ENCODE measurements at regions of chr4 and their contacts with region 1.

Region 1: GRCh38 chr4:123396307-123397143 is at the start of gene SPRY1:
- DNase-seq: peak; percentile 77
- H3K4me3 Mint-ChIP-seq: peak within 1 kb of the TSS; percentile 96
- H3K27ac Mint-ChIP-seq: peak within 1 kb of the TSS; percentile 96
- H3K4me1 Mint-ChIP-seq: peaks cover 42% of the 10 kb centered on the region
- H3K27me3 Mint-ChIP-seq: peaks cover 14% of the 10 kb centered on the region
- total RNA-seq, gene SPRY1: 47.6 and 49.0 TPM in 2 replicates

Region 2: GRCh38 chr4:122617597-122618593 is 778.6 kb before region 1 on chr4:
- intact Hi-C with region 1: loop called (anchors 5 kb)
- DNase-seq: no peak
- H3K4me3 Mint-ChIP-seq: peak overlapping the region; percentile 93
- H3K27ac Mint-ChIP-seq: peak overlapping the region; percentile 93
- H3K4me1 Mint-ChIP-seq: peaks cover 67% of the 10 kb centered on the region
- H3K27me3 Mint-ChIP-seq: no peaks in the 10 kb centered on the region

Region 3: GRCh38 chr4:123102897-123103471 is 293.5 kb before region 1 on chr4:
- intact Hi-C with region 1: loop called (anchors 2 kb)
- DNase-seq: no peak
- H3K4me3 Mint-ChIP-seq: no peak overlapping the region
- H3K27ac Mint-ChIP-seq: no peak overlapping the region
- H3K4me1 Mint-ChIP-seq: peaks cover 7% of the 10 kb centered on the region
- H3K27me3 Mint-ChIP-seq: no peaks in the 10 kb centered on the region

Region 4: GRCh38 chr4:123444290-123444731 is 47.8 kb after region 1 on chr4:
- intact Hi-C with region 1: loop called (anchors 1 kb)
- DNase-seq: peak; percentile 20
- H3K4me3 Mint-ChIP-seq: peak overlapping the region; percentile 48
- H3K27ac Mint-ChIP-seq: peak overlapping the region; percentile 94
- H3K4me1 Mint-ChIP-seq: peaks cover 35% of the 10 kb centered on the region
- H3K27me3 Mint-ChIP-seq: no peaks in the 10 kb centered on the region

Region 5: GRCh38 chr4:123455360-123455759 is 58.8 kb after region 1 on chr4:
- intact Hi-C with region 1: no loop called
- DNase-seq: no peak
- H3K4me3 Mint-ChIP-seq: no peak overlapping the region
- H3K27ac Mint-ChIP-seq: no peak overlapping the region
- H3K4me1 Mint-ChIP-seq: peaks cover 12% of the 10 kb centered on the region
- H3K27me3 Mint-ChIP-seq: no peaks in the 10 kb centered on the region

Region 6: GRCh38 chr4:123505095-123506010 is 108.8 kb after region 1 on chr4:
- intact Hi-C with region 1: loop called (anchors 1 kb)
- DNase-seq: no peak
- H3K4me3 Mint-ChIP-seq: peak overlapping the region; percentile 85
- H3K27ac Mint-ChIP-seq: peak overlapping the region; percentile 79
- H3K4me1 Mint-ChIP-seq: peaks cover 21% of the 10 kb centered on the region
- H3K27me3 Mint-ChIP-seq: peaks cover 38% of the 10 kb centered on the region

Region 7: GRCh38 chr4:123659730-123660129 is 263.2 kb after region 1 on chr4:
- intact Hi-C with region 1: loop called (anchors 1 kb)
- DNase-seq: no peak
- H3K4me3 Mint-ChIP-seq: no peak overlapping the region
- H3K27ac Mint-ChIP-seq: no peak overlapping the region
- H3K4me1 Mint-ChIP-seq: peaks cover 15% of the 10 kb centered on the region
- H3K27me3 Mint-ChIP-seq: peaks cover 24% of the 10 kb centered on the region

Region 8: GRCh38 chr4:123922847-123923246 is 526.3 kb after region 1 on chr4:
- intact Hi-C with region 1: no loop called
- DNase-seq: no peak
- H3K4me3 Mint-ChIP-seq: no peak overlapping the region
- H3K27ac Mint-ChIP-seq: no peak overlapping the region
- H3K4me1 Mint-ChIP-seq: no peaks in the 10 kb centered on the region
- H3K27me3 Mint-ChIP-seq: peaks cover 3% of the 10 kb centered on the region

Measured in activated T-helper 1 cell treated with anti-CD3 and anti-CD28 coated beads, Interleukin-12 subunit alpha, Interleukin-12 subunit beta, Interleukin-2, Interleukin-4 antibody, amounts not matched to agents 30 ng/mL and 10 ng/mL and 1 ng/mL, durations not matched to agents 14 hours and 24 hours and 36 hours (primary cell).